Right ventricle myocardium superior (tissue), 1 donor: ENCODE measurements at regions of chr14 and their contacts with region 1.

Region 1: DNA sequence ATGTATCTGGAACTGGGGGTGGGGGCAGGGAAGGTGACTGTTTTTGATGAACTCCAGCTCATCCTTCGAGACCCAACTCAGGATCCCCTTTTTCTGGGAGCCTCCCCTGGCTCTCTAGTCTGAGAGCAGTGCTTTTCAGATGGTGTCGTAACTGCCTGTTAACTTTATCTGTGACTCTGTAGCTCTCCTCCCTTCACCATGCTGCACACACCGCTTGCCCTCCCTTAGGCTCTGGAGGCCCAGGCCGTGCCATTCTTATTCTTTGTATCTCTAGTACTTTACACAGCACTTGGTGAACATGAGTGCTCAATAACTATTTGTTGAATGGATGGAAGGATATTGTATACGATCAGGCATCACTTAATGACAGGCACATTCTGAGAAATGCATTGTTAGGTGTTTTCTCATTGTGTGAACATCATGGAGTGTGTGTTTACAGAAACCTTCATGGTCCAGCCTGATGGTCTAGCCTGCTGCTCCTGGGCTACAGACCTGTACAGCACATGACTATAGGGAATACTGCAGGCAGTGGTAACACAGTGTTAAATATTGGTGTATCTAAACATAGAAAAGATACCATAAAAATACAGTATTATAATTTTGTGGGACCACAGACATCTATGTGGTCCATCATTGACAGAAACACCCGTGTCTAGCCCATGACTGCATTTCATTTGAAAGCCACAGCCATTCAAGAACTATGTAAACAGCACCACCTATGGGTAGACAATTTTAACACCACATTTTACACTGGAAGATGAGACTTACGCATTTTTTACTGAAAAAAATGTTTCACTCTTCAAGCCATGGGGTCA is 91.8 kb downstream of the EML1 start:
- DNase-seq: no peak
- ATAC-seq: peak; percentile 92

Region 2: DNA sequence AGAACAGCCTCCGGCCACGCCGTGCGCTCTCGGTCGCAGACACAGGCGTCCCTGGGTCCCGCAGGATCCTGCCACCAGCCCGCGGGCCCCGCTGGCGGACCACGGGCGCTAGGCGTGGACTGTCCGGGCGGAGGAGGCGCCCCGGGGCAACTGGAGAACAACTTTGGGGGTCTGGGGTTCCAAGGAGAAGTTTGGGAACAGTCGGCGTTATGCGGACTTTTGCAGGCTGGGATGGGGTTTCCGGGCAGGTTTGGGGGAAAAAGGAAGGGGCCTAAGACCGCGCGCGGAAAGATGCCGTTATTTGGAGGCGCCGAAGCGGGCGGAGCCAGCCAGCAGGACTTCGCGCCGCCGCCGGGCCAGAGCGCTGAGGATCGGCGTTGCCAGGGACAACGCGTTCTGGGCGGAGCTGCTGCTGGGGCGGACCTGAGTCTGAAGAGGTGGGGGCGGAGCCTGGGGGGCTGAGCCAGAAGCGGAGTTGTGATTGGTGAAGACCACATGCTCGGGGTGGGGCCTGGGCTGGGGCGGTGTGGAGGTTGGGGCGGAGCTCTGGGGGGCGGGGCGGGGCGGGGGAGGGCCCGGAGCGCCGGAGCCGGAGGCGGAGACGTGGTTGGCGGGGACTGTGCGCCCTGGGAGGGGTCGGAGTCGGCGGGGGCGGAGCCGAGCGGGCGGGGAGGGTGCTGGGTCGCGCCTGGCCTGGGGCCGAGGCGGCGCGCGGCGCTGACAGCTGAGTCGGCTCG is 201.3 kb before region 1 on chr14 and contains the start of gene CYP46A1:
- intact Hi-C with region 1: loop called (anchors 5 kb)
- DNase-seq: peak; percentile 100
- ATAC-seq: peak; percentile 96
- total RNA-seq, gene CYP46A1: 3.0 TPM

Region 3: GRCh38 chr14:99729991-99730868 is 154.8 kb before region 1 on chr14:
- intact Hi-C with region 1: loop called (anchors 2 kb)
- DNase-seq: peak; percentile 85
- ATAC-seq: peak; percentile 80

Region 4: GRCh38 chr14:99793213-99794150 is 91.6 kb before region 1 on chr14 and contains the start of gene EML1:
- intact Hi-C with region 1: loop called (anchors 10 kb)
- DNase-seq: peak; percentile 89
- ATAC-seq: peak; percentile 92
- total RNA-seq, gene EML1: 39.5 TPM

Region 5: GRCh38 chr14:99930420-99931274 is 45.6 kb after region 1 on chr14:
- intact Hi-C with region 1: no loop called
- DNase-seq: no peak
- ATAC-seq: no peak